CD4-positive, alpha-beta memory T cell (primary cell): ENCODE measurements at regions of chr6 and their contacts with region 1.

Region 1: DNA sequence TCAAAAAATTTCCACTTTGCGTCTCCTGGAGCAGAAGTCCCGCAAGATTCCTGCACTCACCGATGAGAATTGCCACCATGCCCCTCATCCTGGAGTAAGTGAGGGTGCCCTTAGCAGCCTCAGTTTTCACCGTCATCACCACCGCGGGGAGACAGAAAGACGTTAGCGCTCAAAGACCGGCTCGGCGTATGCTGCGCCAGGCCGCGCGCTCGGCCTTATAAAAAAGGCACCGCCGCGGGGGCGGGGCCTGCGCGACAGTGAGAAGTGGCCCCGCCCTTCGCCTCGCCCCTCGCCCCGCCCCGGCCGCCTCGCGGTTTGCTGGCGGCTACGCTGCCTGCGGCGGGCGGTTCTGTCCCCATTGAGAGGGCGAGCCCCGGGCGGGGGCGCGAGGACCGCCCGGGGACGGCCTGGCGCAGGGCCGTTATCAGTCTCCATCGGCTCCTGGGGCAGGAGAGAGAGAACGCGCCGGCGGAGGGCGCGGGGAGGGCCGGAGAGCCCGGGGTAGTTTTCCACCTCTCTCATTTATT is 122.3 kb upstream of the SLC2A12 start:
- DNase-seq: peak; percentile 88 to 93 (median 91)
- H3K4me3 ChIP-seq: peak overlapping the region; percentile 39 to 98
- H3K4me3 Mint-ChIP-seq: peak overlapping the region; percentile 95 to 98 (median 98)
- H3K27ac ChIP-seq: peak overlapping the region; percentile 86
- H3K27ac Mint-ChIP-seq: peak overlapping the region; percentile 91 to 99 (median 96)
- H3K4me1 ChIP-seq: peaks cover 68% of the 10 kb centered on the region
- H3K4me1 Mint-ChIP-seq: peaks cover 39 to 78% (median 63%) of the 10 kb centered on the region in 4 donors
- H3K27me3 ChIP-seq: no peaks in the 10 kb centered on the region
- H3K27me3 Mint-ChIP-seq: no peaks in the 10 kb centered on the region

Region 2: GRCh38 chr6:132813173-132813856 is 1361.4 kb before region 1 on chr6:
- CTCF ChIA-PET with region 1: no interaction called
- POLR2A ChIA-PET with region 1: no interaction called
- intact Hi-C with region 1: loop called (anchors 2 kb)
- DNase-seq: peak; percentile 58 to 67 (median 64)
- H3K4me3 ChIP-seq: peak overlapping the region; percentile 78
- H3K4me3 Mint-ChIP-seq: peak overlapping the region; percentile 94 to 100 (median 98)
- H3K27ac ChIP-seq: peak overlapping the region; percentile 76
- H3K27ac Mint-ChIP-seq: peak overlapping the region; percentile 96 to 99 (median 98)
- H3K4me1 ChIP-seq: peaks cover 40% of the 10 kb centered on the region
- H3K4me1 Mint-ChIP-seq: peaks cover 28 to 58% (median 45%) of the 10 kb centered on the region in 4 donors
- H3K27me3 ChIP-seq: no peaks in the 10 kb centered on the region
- H3K27me3 Mint-ChIP-seq: peaks cover 0 to 2% of the 10 kb centered on the region in 2 donors

Region 3: GRCh38 chr6:132872923-132873322 is 1301.8 kb before region 1 on chr6:
- CTCF ChIA-PET with region 1: no interaction called
- POLR2A ChIA-PET with region 1: no interaction called
- intact Hi-C with region 1: no loop called
- DNase-seq: no peak
- H3K4me3 ChIP-seq: no peak overlapping the region
- H3K4me3 Mint-ChIP-seq: no peak overlapping the region
- H3K27ac ChIP-seq: no peak overlapping the region
- H3K27ac Mint-ChIP-seq: no peak overlapping the region
- H3K4me1 ChIP-seq: no peaks in the 10 kb centered on the region
- H3K4me1 Mint-ChIP-seq: no peaks in the 10 kb centered on the region
- H3K27me3 ChIP-seq: no peaks in the 10 kb centered on the region
- H3K27me3 Mint-ChIP-seq: peaks cover under 1 to 4% of the 10 kb centered on the region in 2 donors

Region 4: DNA sequence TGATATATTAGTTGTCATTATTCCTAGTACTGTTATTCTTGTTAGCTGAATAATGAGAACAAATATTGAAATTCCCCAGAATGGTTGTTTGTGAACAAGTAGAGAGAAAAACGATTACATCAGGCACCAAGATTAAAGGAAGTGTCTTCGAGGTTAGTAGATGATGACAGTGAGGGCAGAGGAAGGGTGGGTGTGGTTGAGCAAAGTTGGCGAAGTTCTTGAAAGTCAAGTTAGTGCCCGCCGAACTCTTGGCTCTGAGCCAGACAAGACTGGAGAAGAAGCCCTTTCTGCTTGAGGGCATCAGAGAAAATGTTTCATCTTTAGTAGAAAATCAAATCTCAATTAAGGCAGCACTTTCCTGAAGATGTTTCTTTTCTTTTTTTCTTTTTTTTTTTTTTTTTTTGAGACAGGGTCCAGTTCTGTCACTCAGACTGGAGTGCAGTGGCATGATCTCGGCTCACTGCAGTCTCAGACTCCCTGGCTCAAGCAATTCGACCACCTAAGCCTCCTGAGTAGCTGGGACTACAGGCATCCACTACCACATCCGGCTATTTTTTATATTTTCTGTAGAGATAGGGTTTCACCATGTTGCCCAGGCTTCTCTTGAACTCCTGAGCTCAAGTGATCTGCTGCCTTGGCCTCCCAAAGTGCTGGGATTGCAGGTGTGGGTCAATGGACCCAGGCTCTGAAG is 66.1 kb after region 1 on chr6:
- CTCF ChIA-PET with region 1: interaction called, 7 read pairs
- POLR2A ChIA-PET with region 1: no interaction called
- intact Hi-C with region 1: loop called (anchors 1 kb)
- DNase-seq: peak; percentile 83 to 95 (median 89)
- H3K4me3 ChIP-seq: no peak overlapping the region
- H3K4me3 Mint-ChIP-seq: peak overlapping the region; percentile 1 to 80 (median 46)
- H3K27ac ChIP-seq: peak overlapping the region; percentile 52
- H3K27ac Mint-ChIP-seq: peak overlapping the region; percentile 77 to 94 (median 92)
- H3K4me1 ChIP-seq: peaks cover 49% of the 10 kb centered on the region
- H3K4me1 Mint-ChIP-seq: peaks cover 33 to 62% (median 46%) of the 10 kb centered on the region in 4 donors
- H3K27me3 ChIP-seq: no peaks in the 10 kb centered on the region
- H3K27me3 Mint-ChIP-seq: no peaks in the 10 kb centered on the region

Region 5: GRCh38 chr6:134381959-134382358 is 207.2 kb after region 1 on chr6:
- CTCF ChIA-PET with region 1: no interaction called
- POLR2A ChIA-PET with region 1: no interaction called
- intact Hi-C with region 1: loop called (anchors 2 kb)
- DNase-seq: no peak
- H3K4me3 ChIP-seq: no peak overlapping the region
- H3K4me3 Mint-ChIP-seq: no peak overlapping the region
- H3K27ac ChIP-seq: no peak overlapping the region
- H3K27ac Mint-ChIP-seq: no peak overlapping the region
- H3K4me1 ChIP-seq: peaks cover 24% of the 10 kb centered on the region
- H3K4me1 Mint-ChIP-seq: peaks cover 21 to 26% (median 23%) of the 10 kb centered on the region in 4 donors
- H3K27me3 ChIP-seq: no peaks in the 10 kb centered on the region
- H3K27me3 Mint-ChIP-seq: no peaks in the 10 kb centered on the region

Region 6: DNA sequence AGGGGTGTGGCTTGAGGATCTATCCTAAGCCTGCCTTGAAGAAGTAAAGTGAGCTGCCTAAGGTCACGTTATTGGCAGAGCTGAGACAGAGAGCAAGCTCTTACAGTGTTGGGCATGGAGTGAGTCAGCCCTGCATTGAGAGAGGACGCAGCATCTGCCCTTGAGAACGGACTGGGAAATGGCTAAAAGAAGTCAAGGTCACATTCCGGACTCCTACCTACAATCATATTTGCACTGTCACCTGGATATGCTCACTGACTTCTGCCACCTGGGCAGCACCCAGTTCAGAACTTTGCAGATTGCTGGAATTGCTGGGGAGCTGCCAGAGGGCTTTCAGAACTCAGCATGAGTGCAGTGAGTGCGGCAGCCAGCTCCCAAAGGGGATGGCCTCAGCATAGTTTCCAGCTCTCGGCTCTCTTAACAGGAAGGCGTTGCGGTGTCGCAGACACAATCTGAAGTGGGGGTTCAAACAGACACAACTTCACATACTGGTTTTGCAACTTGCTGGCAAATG is 342.5 kb after region 1 on chr6:
- CTCF ChIA-PET with region 1: no interaction called
- POLR2A ChIA-PET with region 1: no interaction called
- intact Hi-C with region 1: loop called (anchors 5 kb)
- DNase-seq: no peak
- H3K4me3 ChIP-seq: no peak overlapping the region
- H3K4me3 Mint-ChIP-seq: no peak overlapping the region
- H3K27ac ChIP-seq: no peak overlapping the region
- H3K27ac Mint-ChIP-seq: peak overlapping the region in 4 of 7 donors; percentile 22 to 89 (median 58)
- H3K4me1 ChIP-seq: peaks cover 18% of the 10 kb centered on the region
- H3K4me1 Mint-ChIP-seq: peaks cover 7 to 25% (median 15%) of the 10 kb centered on the region in 4 donors
- H3K27me3 ChIP-seq: no peaks in the 10 kb centered on the region
- H3K27me3 Mint-ChIP-seq: no peaks in the 10 kb centered on the region

Region 7: GRCh38 chr6:134822920-134823709 is 648.4 kb after region 1 on chr6:
- CTCF ChIA-PET with region 1: interaction called, 33 read pairs
- POLR2A ChIA-PET with region 1: interaction called, 3 read pairs
- intact Hi-C with region 1: loop called (anchors 1 kb)
- DNase-seq: peak in 4 of 5 donors; percentile 46 to 54 (median 51)
- H3K4me3 ChIP-seq: no peak overlapping the region
- H3K4me3 Mint-ChIP-seq: no peak overlapping the region
- H3K27ac ChIP-seq: no peak overlapping the region
- H3K27ac Mint-ChIP-seq: no peak overlapping the region
- H3K4me1 ChIP-seq: no peaks in the 10 kb centered on the region
- H3K4me1 Mint-ChIP-seq: peaks cover 0 to 3% (median 0%) of the 10 kb centered on the region in 4 donors
- H3K27me3 ChIP-seq: no peaks in the 10 kb centered on the region
- H3K27me3 Mint-ChIP-seq: peaks cover 3 to 7% of the 10 kb centered on the region in 2 donors

Region 8: GRCh38 chr6:135183532-135184440 is 1009.1 kb after region 1 on chr6:
- CTCF ChIA-PET with region 1: no interaction called
- POLR2A ChIA-PET with region 1: no interaction called
- intact Hi-C with region 1: loop called (anchors 2 kb)
- DNase-seq: peak; percentile 65 to 79 (median 71)
- H3K4me3 ChIP-seq: peak overlapping the region; percentile 51 to 57
- H3K4me3 Mint-ChIP-seq: peak overlapping the region; percentile 87 to 96 (median 92)
- H3K27ac ChIP-seq: no peak overlapping the region
- H3K27ac Mint-ChIP-seq: peak overlapping the region; percentile 17 to 87 (median 57)
- H3K4me1 ChIP-seq: peaks cover 12% of the 10 kb centered on the region
- H3K4me1 Mint-ChIP-seq: peaks cover 8 to 28% (median 17%) of the 10 kb centered on the region in 4 donors
- H3K27me3 ChIP-seq: no peaks in the 10 kb centered on the region
- H3K27me3 Mint-ChIP-seq: no peaks in the 10 kb centered on the region